ENCODE measurements at regions of chr1 and their contacts with region 1.

Region 1: GRCh38 chr1:89632657-89633247 is at the start of gene LRRC8C:
- DNase-seq: no peak
- ATAC-seq: peak; percentile 85
- H3K4me3 ChIP-seq: peak within 1 kb of the TSS; percentile 88
- H3K27ac ChIP-seq: peak within 1 kb of the TSS; percentile 76
- H3K4me1 ChIP-seq: peaks cover 12% of the 10 kb centered on the region
- H3K27me3 ChIP-seq: no peaks in the 10 kb centered on the region; a peak in 1 of 4 replicates
- CTCF ChIP-seq: peak; percentile 23 to 68 (median 41); a peak in 4 of 6 replicates
- EP300 ChIP-seq: no peak; a peak in 1 of 4 replicates
- POLR2A ChIP-seq: 0 out of 2 replicates have a peak, but pooled peaks have one; percentile 19
- RAD21 ChIP-seq: peak; percentile 80
- polyA plus RNA-seq, gene LRRC8C: 2.3 to 3.1 TPM

Region 2: DNA sequence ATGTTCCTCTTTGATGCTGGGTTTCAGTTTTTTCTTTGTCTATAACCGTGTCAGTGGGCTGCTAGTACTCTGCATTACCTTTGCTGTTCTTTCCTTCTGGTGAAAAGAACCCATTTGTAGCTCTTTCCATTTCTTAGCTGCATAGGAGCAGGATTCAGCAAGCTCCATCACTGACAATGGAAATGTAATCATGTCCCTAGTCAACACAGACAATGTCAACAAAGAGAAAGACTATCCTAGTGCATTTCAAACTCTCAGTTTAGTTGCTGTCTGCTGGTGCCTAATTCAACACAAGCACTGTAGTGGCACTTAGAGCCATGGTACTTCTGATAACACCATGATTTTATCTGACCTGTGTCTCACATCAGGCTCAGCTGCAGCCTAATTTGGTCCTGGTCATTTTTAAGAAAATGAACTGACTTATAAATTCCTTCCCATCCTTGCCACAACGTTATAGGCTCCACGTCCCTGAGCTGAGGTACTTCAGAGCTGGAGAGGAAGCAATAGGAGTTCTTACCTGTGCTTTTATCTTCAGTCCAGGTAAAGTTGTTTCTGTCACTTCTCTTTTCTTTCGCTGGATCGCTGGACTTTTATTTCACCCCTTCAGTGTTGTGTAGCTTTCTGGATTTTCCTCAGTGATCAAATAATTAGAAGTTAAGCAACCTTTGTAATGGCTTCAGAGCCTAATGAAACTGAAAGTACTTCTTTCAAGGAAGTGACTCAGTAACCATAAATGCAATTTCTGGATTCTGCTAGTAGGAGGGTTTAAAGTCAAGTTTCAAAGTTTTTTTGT is 610.4 kb before region 1 on chr1 and contains the start of gene GBP3:
- CTCF ChIA-PET with region 1: no interaction called
- POLR2A ChIA-PET with region 1: no interaction called
- RAD21 ChIA-PET with region 1: no interaction called
- SMC1A ChIA-PET with region 1: no interaction called
- in situ Hi-C with region 1: no loop called
- intact Hi-C with region 1: no loop called
- DNase-seq: peak; percentile 33
- ATAC-seq: peak; percentile 88
- H3K4me3 ChIP-seq: peak within 1 kb of the TSS; percentile 65
- H3K27ac ChIP-seq: peak within 1 kb of the TSS; percentile 52
- H3K4me1 ChIP-seq: peaks cover 3% of the 10 kb centered on the region; the same call in 1 of the 2 replicates
- H3K27me3 ChIP-seq: no peaks in the 10 kb centered on the region
- CTCF ChIP-seq: no peak
- EP300 ChIP-seq: no peak
- POLR2A ChIP-seq: no peak
- RAD21 ChIP-seq: no peak
- polyA plus RNA-seq, gene GBP3: 0.32 to 1.2 TPM

Region 3: GRCh38 chr1:89483010-89483756 is 149.6 kb before region 1 on chr1:
- CTCF ChIA-PET with region 1: interaction called, 10 read pairs
- POLR2A ChIA-PET with region 1: no interaction called
- RAD21 ChIA-PET with region 1: interaction called, 3 read pairs
- SMC1A ChIA-PET with region 1: interaction called, 6 read pairs
- in situ Hi-C with region 1: no loop called
- intact Hi-C with region 1: no loop called
- DNase-seq: peak; percentile 46
- ATAC-seq: peak; percentile 97
- H3K4me3 ChIP-seq: no peak overlapping the region
- H3K27ac ChIP-seq: no peak overlapping the region
- H3K4me1 ChIP-seq: no peaks in the 10 kb centered on the region
- H3K27me3 ChIP-seq: no peaks in the 10 kb centered on the region
- CTCF ChIP-seq: peak; percentile 72 to 82 (median 78)
- EP300 ChIP-seq: no peak
- POLR2A ChIP-seq: no peak
- RAD21 ChIP-seq: peak; percentile 77

Region 4: GRCh38 chr1:89552471-89553081 is 80.2 kb before region 1 on chr1:
- CTCF ChIA-PET with region 1: no interaction called
- POLR2A ChIA-PET with region 1: no interaction called
- RAD21 ChIA-PET with region 1: no interaction called
- SMC1A ChIA-PET with region 1: no interaction called
- in situ Hi-C with region 1: no loop called
- intact Hi-C with region 1: no loop called
- DNase-seq: peak; percentile 36
- ATAC-seq: peak; percentile 88
- H3K4me3 ChIP-seq: no peak overlapping the region
- H3K27ac ChIP-seq: peak overlapping the region; percentile 75
- H3K4me1 ChIP-seq: peaks cover 23% of the 10 kb centered on the region; the same call in 1 of the 2 replicates
- H3K27me3 ChIP-seq: no peaks in the 10 kb centered on the region
- CTCF ChIP-seq: no peak
- EP300 ChIP-seq: peak in 1 of 2 experiments; percentile 38; a peak in 1 of 4 replicates
- POLR2A ChIP-seq: no peak
- RAD21 ChIP-seq: no peak

Region 5: GRCh38 chr1:89615676-89616598 is 16.8 kb before region 1 on chr1:
- CTCF ChIA-PET with region 1: interaction called, 20 read pairs
- POLR2A ChIA-PET with region 1: interaction called, 9 read pairs
- RAD21 ChIA-PET with region 1: interaction called, 18 read pairs
- SMC1A ChIA-PET with region 1: interaction called, 42 read pairs
- in situ Hi-C with region 1: no loop called
- intact Hi-C with region 1: no loop called
- DNase-seq: no peak
- ATAC-seq: peak; percentile 37
- H3K4me3 ChIP-seq: no peak overlapping the region
- H3K27ac ChIP-seq: no peak overlapping the region
- H3K4me1 ChIP-seq: peaks cover 14% of the 10 kb centered on the region
- H3K27me3 ChIP-seq: no peaks in the 10 kb centered on the region
- CTCF ChIP-seq: peak; percentile 15 to 52 (median 37); a peak in 4 of 6 replicates
- EP300 ChIP-seq: no peak
- POLR2A ChIP-seq: no peak
- RAD21 ChIP-seq: 0 out of 2 replicates have a peak, but pooled peaks have one; percentile 8

Region 6: GRCh38 chr1:89657886-89658285 is 25.1 kb after region 1 on chr1:
- CTCF ChIA-PET with region 1: interaction called, 11 read pairs
- POLR2A ChIA-PET with region 1: interaction called, 13 read pairs
- RAD21 ChIA-PET with region 1: interaction called, 21 read pairs
- SMC1A ChIA-PET with region 1: interaction called, 189 read pairs
- in situ Hi-C with region 1: no loop called
- intact Hi-C with region 1: no loop called
- DNase-seq: peak; percentile 76
- ATAC-seq: peak; percentile 84
- H3K4me3 ChIP-seq: no peak overlapping the region
- H3K27ac ChIP-seq: peak overlapping the region; percentile 35
- H3K4me1 ChIP-seq: peaks cover 23% of the 10 kb centered on the region
- H3K27me3 ChIP-seq: no peaks in the 10 kb centered on the region
- CTCF ChIP-seq: no peak
- EP300 ChIP-seq: peak in 1 of 2 experiments; percentile 57; a peak in 1 of 4 replicates
- POLR2A ChIP-seq: no peak
- RAD21 ChIP-seq: no peak

Region 7: DNA sequence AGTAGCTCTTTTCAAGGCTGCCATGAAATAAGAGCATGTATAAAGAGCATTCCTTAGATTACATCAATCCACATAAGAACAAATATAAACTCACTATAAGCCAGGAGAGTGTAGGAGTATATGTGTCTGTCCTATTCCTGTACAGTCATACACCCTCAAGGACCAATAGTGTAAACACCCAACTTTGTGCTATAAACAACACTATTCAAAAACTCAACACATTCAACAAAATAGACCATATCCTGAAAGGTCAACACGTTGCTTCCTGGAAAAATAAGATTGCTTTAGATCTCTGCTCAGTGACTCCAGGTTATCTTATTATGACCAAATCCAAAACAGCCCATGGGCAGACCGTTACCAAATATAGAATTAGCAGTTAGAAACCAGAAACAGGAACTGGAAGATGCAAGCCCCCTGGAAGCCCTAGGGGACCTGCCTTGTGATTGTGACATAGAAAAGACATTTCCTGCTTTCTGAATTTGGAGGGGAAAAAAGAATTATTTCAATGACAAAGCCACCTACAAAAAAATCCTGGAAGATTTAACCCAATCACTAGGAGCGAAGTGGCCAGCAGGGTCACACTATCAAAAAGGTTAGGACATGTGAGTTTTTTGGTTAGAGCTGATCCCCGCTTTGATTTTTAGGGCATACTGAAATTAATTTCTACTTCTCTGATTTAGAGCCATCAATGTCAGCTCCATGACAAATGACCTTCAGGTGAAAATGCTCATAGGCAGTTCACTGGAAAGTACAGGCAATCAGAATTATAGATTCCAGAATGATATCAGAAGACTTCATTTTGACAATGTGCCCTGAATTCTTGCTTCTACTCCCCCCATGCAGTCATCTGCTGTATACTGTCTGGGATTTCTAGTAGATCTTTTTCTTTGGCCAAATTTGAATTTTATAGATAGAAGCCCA is 60.1 kb after region 1 on chr1:
- CTCF ChIA-PET with region 1: interaction called, 3 read pairs
- POLR2A ChIA-PET with region 1: interaction called, 4 read pairs
- RAD21 ChIA-PET with region 1: interaction called, 41 read pairs
- SMC1A ChIA-PET with region 1: interaction called, 25 read pairs
- in situ Hi-C with region 1: no loop called
- intact Hi-C with region 1: no loop called
- DNase-seq: peak; percentile 52
- ATAC-seq: peak; percentile 83
- H3K4me3 ChIP-seq: peak overlapping the region; percentile 55; the same call in 1 of the 2 replicates
- H3K27ac ChIP-seq: peak overlapping the region; percentile 86
- H3K4me1 ChIP-seq: peaks cover 24% of the 10 kb centered on the region
- H3K27me3 ChIP-seq: no peaks in the 10 kb centered on the region
- CTCF ChIP-seq: no peak
- EP300 ChIP-seq: peak; percentile 89 to 91
- POLR2A ChIP-seq: no peak
- RAD21 ChIP-seq: no peak

Region 8: DNA sequence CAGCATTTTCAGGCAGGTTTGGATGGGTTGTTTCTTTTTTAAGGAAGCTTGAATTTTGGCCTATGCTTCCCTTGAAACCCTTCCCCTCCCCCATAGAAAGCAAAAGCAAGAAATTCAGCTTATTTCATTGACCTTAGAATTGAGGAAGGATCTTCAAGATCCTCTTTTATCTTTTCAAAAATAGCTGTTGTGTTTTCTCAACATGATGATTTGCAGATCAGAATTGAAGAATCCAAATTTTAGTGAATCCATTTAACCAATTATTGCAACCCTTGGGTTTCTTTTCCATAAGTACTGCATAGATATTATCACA is 73.9 kb after region 1 on chr1:
- CTCF ChIA-PET with region 1: interaction called, 4 read pairs
- POLR2A ChIA-PET with region 1: no interaction called
- RAD21 ChIA-PET with region 1: no interaction called
- SMC1A ChIA-PET with region 1: interaction called, 16 read pairs
- in situ Hi-C with region 1: no loop called
- intact Hi-C with region 1: no loop called
- DNase-seq: no peak
- ATAC-seq: peak; percentile 51
- H3K4me3 ChIP-seq: peak overlapping the region; percentile 1; the same call in 1 of the 2 replicates
- H3K27ac ChIP-seq: peak overlapping the region; percentile 37
- H3K4me1 ChIP-seq: peaks cover 21% of the 10 kb centered on the region
- H3K27me3 ChIP-seq: no peaks in the 10 kb centered on the region
- CTCF ChIP-seq: no peak
- EP300 ChIP-seq: no peak
- POLR2A ChIP-seq: no peak
- RAD21 ChIP-seq: no peak

Region 9: GRCh38 chr1:89780721-89781120 is 148.0 kb after region 1 on chr1:
- CTCF ChIA-PET with region 1: interaction called, 8 read pairs
- POLR2A ChIA-PET with region 1: interaction called, 3 read pairs
- RAD21 ChIA-PET with region 1: interaction called, 6 read pairs
- SMC1A ChIA-PET with region 1: interaction called, 22 read pairs
- in situ Hi-C with region 1: no loop called
- intact Hi-C with region 1: no loop called
- DNase-seq: no peak
- ATAC-seq: peak; percentile 71
- H3K4me3 ChIP-seq: no peak overlapping the region
- H3K27ac ChIP-seq: no peak overlapping the region
- H3K4me1 ChIP-seq: peaks cover 13% of the 10 kb centered on the region; the same call in 1 of the 2 replicates
- H3K27me3 ChIP-seq: no peaks in the 10 kb centered on the region
- CTCF ChIP-seq: peak; percentile 25 to 43 (median 34); a peak in 4 of 6 replicates
- EP300 ChIP-seq: no peak
- POLR2A ChIP-seq: no peak
- RAD21 ChIP-seq: peak; percentile 66

Region 10: DNA sequence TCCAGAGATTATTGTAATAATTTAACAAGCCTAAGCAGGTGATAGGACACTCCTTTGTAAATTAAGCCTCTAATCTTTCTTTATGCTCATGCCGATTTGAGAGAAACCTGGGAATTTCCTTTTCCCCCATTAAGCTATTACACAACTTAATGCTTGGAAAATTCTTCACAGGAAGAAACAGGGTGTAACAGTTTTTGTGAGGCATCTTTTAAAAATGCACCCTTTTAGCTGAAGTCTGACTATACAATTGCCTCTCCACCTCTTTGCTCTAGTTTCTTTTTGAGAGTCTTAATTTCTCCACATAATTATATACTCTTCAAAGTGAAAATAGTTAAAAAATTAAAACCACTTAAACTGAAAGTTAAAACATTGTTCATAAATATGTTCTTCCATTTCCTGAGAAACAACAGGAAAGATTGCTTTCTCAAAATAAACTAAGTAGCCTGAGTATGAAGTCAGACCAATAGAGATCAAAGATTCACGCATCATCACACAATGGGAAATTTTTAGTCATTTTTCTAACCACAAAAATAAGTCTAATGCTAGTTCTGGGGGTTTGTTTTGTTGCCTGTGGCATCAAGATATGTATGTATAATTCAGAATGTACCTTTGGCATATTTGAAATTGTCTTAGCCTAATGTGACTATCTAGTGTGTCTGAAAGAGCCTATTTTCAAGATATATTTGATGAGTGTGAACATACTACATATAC is 222.8 kb after region 1 on chr1:
- CTCF ChIA-PET with region 1: no interaction called
- POLR2A ChIA-PET with region 1: no interaction called
- RAD21 ChIA-PET with region 1: no interaction called
- SMC1A ChIA-PET with region 1: no interaction called
- in situ Hi-C with region 1: no loop called
- intact Hi-C with region 1: no loop called
- DNase-seq: peak; percentile 61
- ATAC-seq: peak; percentile 94
- H3K4me3 ChIP-seq: 0 out of 2 replicates have a peak overlapping the region, but pooled peaks have one; percentile 15
- H3K27ac ChIP-seq: peak overlapping the region; percentile 61; the same call in 1 of the 2 replicates
- H3K4me1 ChIP-seq: peaks cover 14% of the 10 kb centered on the region
- H3K27me3 ChIP-seq: no peaks in the 10 kb centered on the region
- CTCF ChIP-seq: no peak
- EP300 ChIP-seq: peak in 1 of 2 experiments; percentile 60; a peak in 1 of 4 replicates
- POLR2A ChIP-seq: no peak
- RAD21 ChIP-seq: no peak

Region 11: DNA sequence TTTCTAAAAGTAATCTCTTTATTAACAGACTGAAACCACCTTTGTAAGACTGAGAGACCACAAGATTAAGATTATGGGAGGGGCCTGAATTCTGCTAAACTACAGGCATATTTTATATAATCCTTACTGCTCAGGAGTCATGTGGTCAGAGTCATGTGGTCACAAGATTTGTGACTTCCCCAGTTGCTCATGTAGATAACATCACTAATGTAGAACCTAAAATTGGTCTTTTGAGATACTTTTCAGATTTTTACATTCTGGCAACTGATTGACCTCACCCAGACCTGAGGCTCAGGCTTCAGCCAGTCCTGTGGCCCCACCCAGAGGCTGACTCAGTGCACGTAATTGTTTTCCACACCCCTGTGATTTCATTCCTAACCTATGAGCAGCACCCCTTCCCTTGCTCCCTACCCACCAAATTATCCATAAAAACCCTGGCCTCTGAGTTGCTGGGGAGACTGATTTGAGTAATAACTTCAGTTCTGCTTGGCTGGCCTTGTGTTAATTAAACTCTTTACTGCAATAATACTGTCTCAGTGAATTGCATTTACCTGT is 320.4 kb after region 1 on chr1:
- CTCF ChIA-PET with region 1: no interaction called
- POLR2A ChIA-PET with region 1: no interaction called
- RAD21 ChIA-PET with region 1: no interaction called
- SMC1A ChIA-PET with region 1: no interaction called
- in situ Hi-C with region 1: no loop called
- intact Hi-C with region 1: no loop called
- DNase-seq: peak; percentile 33
- ATAC-seq: peak; percentile 87
- H3K4me3 ChIP-seq: no peak overlapping the region
- H3K27ac ChIP-seq: 0 out of 2 replicates have a peak overlapping the region, but pooled peaks have one; percentile 31
- H3K4me1 ChIP-seq: peaks cover 19% of the 10 kb centered on the region
- H3K27me3 ChIP-seq: no peaks in the 10 kb centered on the region
- CTCF ChIP-seq: peak; percentile 13 to 57 (median 37); a peak in 4 of 6 replicates
- EP300 ChIP-seq: no peak
- POLR2A ChIP-seq: no peak
- RAD21 ChIP-seq: peak; percentile 79

Measured in GM12878 (cell line).